Lower leg skin (tissue), 4 donors: ENCODE measurements at regions of chr14 and their contacts with region 1.

Region 1: DNA sequence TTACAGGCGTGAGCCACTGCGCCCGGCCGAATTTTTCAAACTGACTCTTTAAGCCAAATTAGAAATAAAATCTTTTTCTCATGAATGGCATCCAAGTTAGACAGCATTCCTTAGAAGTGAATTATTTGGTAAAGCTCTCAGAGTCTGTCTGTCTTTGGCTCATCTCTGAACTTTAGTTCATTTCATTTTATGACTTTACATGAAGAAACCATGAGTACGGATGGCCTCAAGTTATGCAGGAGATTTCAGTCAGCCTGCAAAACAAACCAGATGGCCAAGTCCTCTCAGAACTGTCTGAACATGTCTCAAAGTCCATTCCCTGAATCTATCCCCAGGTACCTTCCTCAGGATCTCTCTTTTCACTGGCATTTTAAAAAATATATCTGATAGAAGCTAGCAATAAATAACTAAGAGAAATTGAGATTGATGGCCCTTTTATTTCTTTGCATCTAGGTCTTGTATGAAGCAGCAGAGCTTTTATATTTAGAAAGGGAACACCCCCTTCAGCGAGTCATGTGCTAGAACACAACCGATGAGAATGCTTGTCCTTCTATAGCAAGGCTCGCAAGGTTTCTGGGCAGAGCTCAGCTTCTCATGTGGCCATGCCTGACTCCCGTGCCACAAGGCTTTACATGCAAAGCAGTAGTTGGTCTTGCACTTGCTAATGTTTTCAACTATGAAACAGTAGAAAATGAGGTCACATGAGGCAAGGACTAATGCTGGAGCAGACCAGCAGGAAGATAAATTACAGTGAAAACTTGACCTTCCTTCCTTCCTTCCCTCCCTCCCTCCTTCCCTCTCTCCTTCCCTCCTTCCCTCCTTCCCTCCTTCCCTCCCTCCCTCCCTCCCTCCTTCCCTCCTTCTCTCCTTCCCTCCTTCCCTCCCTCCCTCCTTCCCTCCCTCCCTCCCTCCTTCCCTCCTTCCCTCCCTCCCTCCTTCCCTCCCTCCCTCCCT is 125.0 kb downstream of the AKAP6 start:
- DNase-seq: no peak
- H3K4me3 ChIP-seq: no peak overlapping the region
- CTCF ChIP-seq: no peak
- POLR2A ChIP-seq: no peak

Region 2: DNA sequence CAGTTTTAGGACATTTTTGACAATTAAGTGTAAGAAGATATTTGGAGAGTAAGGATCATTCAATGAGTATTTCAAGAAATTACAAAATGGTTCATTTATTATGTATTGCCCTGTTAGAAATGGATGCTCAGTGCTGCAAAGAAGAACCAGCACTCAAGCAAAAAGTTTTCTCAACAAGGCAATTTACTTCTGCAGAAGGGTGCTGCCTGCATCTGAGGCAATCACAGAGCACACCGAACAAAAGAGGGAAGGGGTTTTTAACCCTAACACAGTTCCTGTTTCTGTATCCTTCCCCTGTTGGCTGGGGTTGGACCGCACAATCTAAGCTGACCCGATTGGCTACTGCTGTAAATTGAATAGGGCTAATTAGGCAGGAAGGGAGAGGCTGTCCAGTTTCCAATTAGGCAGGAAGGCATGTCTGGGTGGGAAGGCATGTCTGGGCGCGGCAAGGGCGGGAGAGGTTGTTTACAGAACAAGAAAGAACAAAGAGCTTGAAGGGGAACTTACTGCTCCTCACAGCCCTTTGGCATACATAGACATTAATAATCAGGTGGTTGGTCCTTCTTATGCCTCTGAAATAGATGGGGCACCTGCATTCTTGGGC is 1966.5 kb after region 1 on chr14:
- intact Hi-C with region 1: loop called (anchors 5 kb)
- DNase-seq: no peak
- H3K4me3 ChIP-seq: no peak overlapping the region
- CTCF ChIP-seq: no peak
- POLR2A ChIP-seq: no peak